Common myeloid progenitor, CD34-positive (primary cell): ENCODE measurements at regions of chr1 and their contacts with region 1.

Region 1: GRCh38 chr1:226687426-226687825 is 51.7 kb downstream of the ITPKB start:
- DNase-seq: peak; percentile 78 to 88 (median 88)
- H3K4me3 ChIP-seq: no peak overlapping the region
- H3K27ac ChIP-seq: no peak overlapping the region
- H3K4me1 ChIP-seq: peaks cover 14 to 56% (median 36%) of the 10 kb centered on the region in 4 experiments
- H3K27me3 ChIP-seq: no peaks in the 10 kb centered on the region

Region 2: GRCh38 chr1:226626577-226626956 is 60.9 kb before region 1 on chr1:
- CTCF ChIA-PET with region 1: interaction called, 213 read pairs
- POLR2A ChIA-PET with region 1: no interaction called
- DNase-seq: peak; percentile 74 to 85 (median 84)
- H3K4me3 ChIP-seq: peak overlapping the region in 3 of 7 experiments; percentile 30 to 61 (median 38)
- H3K27ac ChIP-seq: no peak overlapping the region
- H3K4me1 ChIP-seq: peaks cover 0 to 6% (median 4%) of the 10 kb centered on the region in 4 experiments
- H3K27me3 ChIP-seq: no peaks in the 10 kb centered on the region

Region 3: GRCh38 chr1:226649780-226650179 is 37.6 kb before region 1 on chr1:
- CTCF ChIA-PET with region 1: interaction called, 83 read pairs
- POLR2A ChIA-PET with region 1: no interaction called
- DNase-seq: peak; percentile 46 to 75 (median 74)
- H3K4me3 ChIP-seq: no peak overlapping the region
- H3K27ac ChIP-seq: no peak overlapping the region
- H3K4me1 ChIP-seq: peaks cover 0 to 55% (median 49%) of the 10 kb centered on the region in 4 experiments
- H3K27me3 ChIP-seq: no peaks in the 10 kb centered on the region

Region 4: GRCh38 chr1:226671290-226671689 is 16.1 kb before region 1 on chr1:
- CTCF ChIA-PET with region 1: interaction called, 27 read pairs
- POLR2A ChIA-PET with region 1: interaction called, 3 read pairs
- DNase-seq: no peak
- H3K4me3 ChIP-seq: no peak overlapping the region
- H3K27ac ChIP-seq: no peak overlapping the region
- H3K4me1 ChIP-seq: peaks cover 31 to 57% (median 43%) of the 10 kb centered on the region in 4 experiments
- H3K27me3 ChIP-seq: no peaks in the 10 kb centered on the region

Region 5: GRCh38 chr1:226717256-226717909 is 30.0 kb after region 1 on chr1:
- CTCF ChIA-PET with region 1: interaction called, 12 read pairs
- POLR2A ChIA-PET with region 1: no interaction called
- DNase-seq: peak; percentile 69 to 94 (median 93)
- H3K4me3 ChIP-seq: peak overlapping the region in 3 of 7 experiments; percentile 17 to 43 (median 43)
- H3K27ac ChIP-seq: peak overlapping the region; percentile 61 to 72
- H3K4me1 ChIP-seq: peaks cover 12 to 54% (median 37%) of the 10 kb centered on the region in 4 experiments
- H3K27me3 ChIP-seq: no peaks in the 10 kb centered on the region

Region 6: DNA sequence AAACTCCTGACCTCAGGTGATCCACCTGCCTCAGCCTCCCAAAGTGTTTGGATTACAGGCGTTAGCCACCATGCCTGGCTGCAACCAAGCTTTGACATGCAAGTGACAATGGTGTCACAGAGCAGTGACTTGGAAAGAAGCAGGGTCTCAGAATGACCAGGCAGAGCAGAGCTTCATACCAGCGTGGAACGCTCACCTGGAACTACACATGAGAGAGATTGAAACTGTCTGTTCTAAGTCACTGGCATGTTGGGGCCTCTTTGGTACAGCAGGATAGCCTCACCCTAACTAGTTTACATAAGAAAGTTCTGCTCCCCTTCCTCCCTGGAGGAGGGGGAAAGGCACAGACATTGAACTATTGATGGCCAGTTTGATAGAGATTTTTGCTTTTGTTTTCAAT is 99.1 kb after region 1 on chr1:
- CTCF ChIA-PET with region 1: no interaction called
- POLR2A ChIA-PET with region 1: no interaction called
- DNase-seq: no peak
- H3K4me3 ChIP-seq: no peak overlapping the region
- H3K27ac ChIP-seq: no peak overlapping the region
- H3K4me1 ChIP-seq: no peaks in the 10 kb centered on the region
- H3K27me3 ChIP-seq: no peaks in the 10 kb centered on the region

Region 7: DNA sequence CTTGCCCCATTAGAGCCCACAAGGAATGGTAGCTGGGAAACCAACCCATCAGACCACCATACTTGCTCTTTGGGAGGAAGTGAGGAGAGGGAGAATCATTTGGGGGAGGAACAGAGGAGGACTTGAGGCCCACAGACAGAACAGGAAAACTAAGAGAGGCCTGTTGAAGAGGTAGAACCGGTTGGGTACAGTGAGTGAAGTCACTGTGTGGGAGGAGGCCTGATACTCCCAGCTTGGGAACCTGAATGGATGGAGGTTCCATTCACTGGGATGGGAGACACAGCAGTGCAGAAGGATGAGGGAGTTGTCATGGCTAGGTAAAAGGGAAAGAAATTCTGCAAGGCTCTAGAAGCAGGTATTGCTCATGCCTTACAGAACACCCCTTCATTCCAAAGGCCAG is 119.6 kb after region 1 on chr1:
- CTCF ChIA-PET with region 1: no interaction called
- POLR2A ChIA-PET with region 1: no interaction called
- DNase-seq: no peak
- H3K4me3 ChIP-seq: no peak overlapping the region
- H3K27ac ChIP-seq: no peak overlapping the region
- H3K4me1 ChIP-seq: no peaks in the 10 kb centered on the region
- H3K27me3 ChIP-seq: no peaks in the 10 kb centered on the region